Endothelial cell of umbilical vein (primary cell): ENCODE measurements at regions of chr1 and their contacts with region 1.

Region 1: DNA sequence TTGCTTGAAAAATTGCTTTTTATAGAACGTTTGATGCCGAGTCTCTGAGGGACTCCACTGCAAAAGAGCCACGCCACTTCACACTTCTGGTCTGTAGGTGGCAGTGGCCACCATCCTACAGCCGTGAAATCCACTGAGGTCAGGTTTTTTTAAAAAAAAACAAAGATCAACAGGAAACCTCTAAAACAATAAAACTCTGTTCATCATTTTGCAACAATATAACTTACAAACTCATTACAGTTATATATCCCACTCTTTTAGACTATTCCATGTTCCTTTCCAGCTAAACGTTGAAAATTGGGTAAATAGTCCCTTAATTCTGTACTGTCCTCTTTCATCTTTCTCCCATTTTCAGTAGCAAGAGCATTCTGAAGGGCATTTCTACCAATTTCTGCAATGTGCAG is 64.6 kb upstream of the FMN2 start:
- DNase-seq: peak; percentile 44
- H3K4me3 ChIP-seq: no peak overlapping the region
- H3K27ac ChIP-seq: no peak overlapping the region
- H3K4me1 ChIP-seq: peaks cover 18% of the 10 kb centered on the region
- H3K27me3 ChIP-seq: no peaks in the 10 kb centered on the region
- CTCF ChIP-seq: peak; percentile 80 to 88
- POLR2A ChIP-seq: no peak

Region 2: GRCh38 chr1:239140968-239141367 is 886.1 kb before region 1 on chr1:
- CTCF ChIA-PET with region 1: no interaction called
- POLR2A ChIA-PET with region 1: no interaction called
- dilution Hi-C with region 1: no loop called
- intact Hi-C with region 1: no loop called
- DNase-seq: no peak
- H3K4me3 ChIP-seq: no peak overlapping the region
- H3K27ac ChIP-seq: no peak overlapping the region
- H3K4me1 ChIP-seq: no peaks in the 10 kb centered on the region
- H3K27me3 ChIP-seq: no peaks in the 10 kb centered on the region
- CTCF ChIP-seq: no peak
- POLR2A ChIP-seq: no peak

Region 3: GRCh38 chr1:240092301-240093119 is 65.4 kb after region 1 on chr1:
- CTCF ChIA-PET with region 1: interaction called, 7 read pairs
- POLR2A ChIA-PET with region 1: no interaction called
- dilution Hi-C with region 1: no loop called
- intact Hi-C with region 1: loop called (anchors 2 kb)
- DNase-seq: peak; percentile 38
- H3K4me3 ChIP-seq: peak overlapping the region in 2 of 3 experiments; percentile 23
- H3K27ac ChIP-seq: no peak overlapping the region
- H3K4me1 ChIP-seq: peaks cover 7% of the 10 kb centered on the region
- H3K27me3 ChIP-seq: peaks cover 27 to 51% of the 10 kb centered on the region in 2 experiments
- CTCF ChIP-seq: no peak
- POLR2A ChIP-seq: no peak

Region 4: DNA sequence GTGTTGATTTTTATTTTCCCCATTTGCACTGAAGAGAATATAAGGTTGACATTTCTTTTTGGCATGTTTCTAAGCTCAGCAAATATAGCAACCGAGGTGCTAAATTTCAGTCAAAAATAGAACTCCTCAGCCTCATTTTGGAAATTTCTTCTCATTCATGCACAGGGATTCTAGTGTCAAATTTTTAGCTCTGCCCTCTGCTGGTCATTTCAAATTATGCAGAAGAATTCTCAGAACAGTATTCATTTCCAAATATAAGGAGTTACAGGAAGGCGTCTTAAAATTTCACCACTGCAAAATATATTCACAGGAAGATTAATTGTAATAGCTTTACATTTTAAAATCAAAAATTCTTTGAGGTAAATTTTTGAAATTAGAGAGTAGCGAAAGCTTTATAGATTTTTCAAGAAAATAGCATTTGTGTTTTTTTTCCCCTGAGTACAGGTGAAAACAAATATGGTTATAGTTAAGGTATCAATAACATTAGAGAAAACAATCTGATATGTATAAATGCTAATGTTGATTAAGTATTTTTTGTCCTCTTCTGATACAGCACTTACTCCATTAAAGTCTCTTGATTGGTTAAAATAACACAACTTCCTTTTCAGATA is 122.5 kb after region 1 on chr1:
- CTCF ChIA-PET with region 1: interaction called, 78 read pairs
- POLR2A ChIA-PET with region 1: no interaction called
- dilution Hi-C with region 1: no loop called
- intact Hi-C with region 1: loop called (anchors 1 kb)
- DNase-seq: peak; percentile 37
- H3K4me3 ChIP-seq: no peak overlapping the region
- H3K27ac ChIP-seq: no peak overlapping the region
- H3K4me1 ChIP-seq: no peaks in the 10 kb centered on the region
- H3K27me3 ChIP-seq: no peaks in the 10 kb centered on the region
- CTCF ChIP-seq: peak; percentile 41 to 42
- POLR2A ChIP-seq: no peak

Region 5: DNA sequence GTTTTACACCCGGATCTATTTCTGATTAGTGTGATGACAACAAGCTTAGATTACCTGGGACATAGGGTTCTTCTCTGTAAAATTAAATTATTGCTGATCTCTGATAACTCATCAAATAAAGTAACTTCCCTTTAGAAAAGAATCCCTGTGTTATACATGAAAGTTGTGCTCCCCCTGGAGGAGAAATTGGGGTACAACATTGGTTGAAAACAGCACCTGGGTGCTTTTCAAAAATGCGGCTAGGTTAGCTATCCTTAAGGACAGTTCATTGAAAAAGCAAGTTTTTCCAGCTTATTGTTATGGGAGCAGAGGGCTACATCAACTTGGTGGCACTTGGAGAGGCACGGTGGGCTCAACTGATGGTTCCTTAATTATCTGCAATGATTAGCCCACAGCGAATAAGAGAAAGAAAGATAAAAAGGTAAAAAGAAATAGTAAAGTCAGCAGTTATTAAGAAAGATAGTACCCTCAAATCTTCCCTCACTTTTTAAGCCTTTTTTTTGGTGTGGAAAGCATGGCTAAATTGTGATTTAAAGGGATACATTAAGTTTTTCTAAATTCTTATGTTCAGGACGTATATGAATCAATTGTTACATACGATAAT is 162.4 kb after region 1 on chr1:
- CTCF ChIA-PET with region 1: interaction called, 21 read pairs
- POLR2A ChIA-PET with region 1: no interaction called
- dilution Hi-C with region 1: no loop called
- intact Hi-C with region 1: loop called (anchors 1 kb)
- DNase-seq: peak; percentile 43
- H3K4me3 ChIP-seq: no peak overlapping the region
- H3K27ac ChIP-seq: no peak overlapping the region
- H3K4me1 ChIP-seq: no peaks in the 10 kb centered on the region
- H3K27me3 ChIP-seq: no peaks in the 10 kb centered on the region
- CTCF ChIP-seq: peak; percentile 63
- POLR2A ChIP-seq: no peak